Left cardiac atrium (tissue), 4 donors: ENCODE measurements at regions of chr1 and their contacts with region 1.

Region 1: DNA sequence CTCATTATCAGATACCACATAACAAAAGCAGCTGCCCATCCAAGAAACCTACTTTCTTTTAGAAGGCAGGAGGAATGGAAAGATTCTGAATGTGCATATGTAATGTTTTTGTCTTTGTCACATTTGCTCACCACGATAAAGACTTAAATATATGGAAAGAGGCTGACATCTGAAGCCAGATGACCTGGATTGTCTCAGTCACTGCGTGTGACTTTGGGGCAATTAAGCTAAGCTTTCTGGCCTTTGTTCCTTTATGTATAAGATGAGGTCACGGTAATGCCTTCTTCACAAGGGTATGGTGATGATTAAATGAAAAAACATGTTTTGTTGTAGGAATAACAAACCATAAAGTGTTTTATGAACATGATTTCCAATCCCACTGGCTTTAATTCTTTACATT is 42.6 kb downstream of the LRRC52 start:
- DNase-seq: no peak
- ATAC-seq: no peak

Region 2: DNA sequence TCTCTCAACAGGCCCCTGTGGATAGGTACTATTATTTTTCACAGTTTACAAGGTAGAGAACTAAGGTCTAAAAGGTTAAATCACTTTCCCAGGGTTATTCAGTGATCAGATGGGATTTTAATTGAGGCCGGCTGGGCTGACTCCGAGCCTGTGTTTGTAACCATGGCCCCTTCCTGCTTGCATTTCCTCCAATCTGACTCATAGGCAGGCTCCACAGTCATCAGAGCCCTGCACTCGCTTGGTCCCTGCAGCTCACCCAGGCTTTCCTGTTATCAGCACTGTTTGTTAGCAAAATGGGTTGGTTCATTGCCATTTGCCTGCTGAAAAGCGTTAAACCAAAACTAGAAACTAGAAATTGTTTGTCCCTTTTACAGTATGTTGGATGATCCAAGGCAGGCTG is 188.5 kb before region 1 on chr1:
- intact Hi-C with region 1: loop called in 1 of 2 experiments (anchors 2 kb)
- DNase-seq: peak; percentile 49
- ATAC-seq: peak; percentile 67 to 83